ENCODE measurements at regions of chr16 and their contacts with region 1.

Region 1: DNA sequence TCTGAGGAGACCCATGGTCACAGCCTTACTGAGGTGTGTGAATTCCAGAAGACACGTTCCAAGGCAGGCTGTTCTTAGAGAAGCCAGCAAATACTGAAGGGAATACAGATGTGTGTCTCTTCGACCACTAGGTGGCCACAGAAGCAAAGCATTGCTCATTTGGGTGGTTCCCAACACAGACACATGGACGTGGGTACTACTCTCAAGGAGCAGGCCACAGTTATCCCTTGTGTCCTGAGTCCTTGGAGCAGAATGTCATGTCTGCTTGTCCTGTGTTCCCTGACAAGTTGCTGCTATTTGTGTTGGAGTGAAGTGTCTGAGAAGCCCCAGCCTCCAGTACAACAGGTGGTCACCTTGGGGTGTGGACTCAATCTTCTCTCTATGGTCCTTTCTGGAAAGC is 30.3 kb downstream of the HMOX2 start:
- DNase-seq: peak; percentile 71
- H3K4me3 Mint-ChIP-seq: peak overlapping the region; percentile 52
- H3K27ac Mint-ChIP-seq: peak overlapping the region; percentile 93
- H3K4me1 Mint-ChIP-seq: peaks cover 58% of the 10 kb centered on the region
- H3K27me3 Mint-ChIP-seq: no peaks in the 10 kb centered on the region

Region 2: GRCh38 chr16:4465977-4466779 is 40.3 kb before region 1 on chr16:
- CTCF ChIA-PET with region 1: interaction called, 11 read pairs
- POLR2A ChIA-PET with region 1: interaction called, 14 read pairs
- DNase-seq: peak; percentile 84
- H3K4me3 Mint-ChIP-seq: peak overlapping the region; percentile 1
- H3K27ac Mint-ChIP-seq: peak overlapping the region; percentile 87
- H3K4me1 Mint-ChIP-seq: peaks cover 31% of the 10 kb centered on the region
- H3K27me3 Mint-ChIP-seq: no peaks in the 10 kb centered on the region

Region 3: DNA sequence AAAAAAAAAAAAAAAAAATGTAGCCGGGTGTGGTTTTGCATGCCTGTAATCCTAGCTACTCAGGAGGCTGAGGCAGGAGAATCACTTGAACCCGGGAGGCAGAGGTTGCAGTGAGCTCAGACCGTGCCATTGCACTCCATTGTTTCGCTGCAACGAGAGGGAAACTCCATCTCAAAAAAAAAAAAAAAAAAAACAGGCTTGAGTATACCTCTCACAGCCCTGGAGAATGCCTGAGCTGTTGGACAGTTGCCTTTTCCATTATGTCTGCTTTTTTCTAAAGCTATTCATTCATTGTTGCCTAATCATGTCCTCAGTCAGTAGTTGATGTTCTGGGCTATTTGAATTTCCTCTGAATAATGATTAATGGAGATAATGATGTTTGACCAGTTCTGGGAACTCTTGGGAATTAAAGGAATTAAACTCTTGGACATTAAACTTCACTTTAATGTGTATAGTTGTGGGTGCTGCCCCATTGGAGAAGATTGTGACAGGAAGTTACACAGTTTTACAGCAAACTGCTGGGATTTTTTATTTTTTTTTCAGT is 18.4 kb before region 1 on chr16:
- CTCF ChIA-PET with region 1: interaction called, 43 read pairs
- POLR2A ChIA-PET with region 1: interaction called, 48 read pairs
- DNase-seq: no peak
- H3K4me3 Mint-ChIP-seq: peak overlapping the region; percentile 55
- H3K27ac Mint-ChIP-seq: peak overlapping the region; percentile 97
- H3K4me1 Mint-ChIP-seq: peaks cover 47% of the 10 kb centered on the region
- H3K27me3 Mint-ChIP-seq: no peaks in the 10 kb centered on the region

Region 4: GRCh38 chr16:4517812-4518680 is 11.6 kb after region 1 on chr16:
- CTCF ChIA-PET with region 1: interaction called, 50 read pairs
- POLR2A ChIA-PET with region 1: interaction called, 25 read pairs
- DNase-seq: no peak
- H3K4me3 Mint-ChIP-seq: no peak overlapping the region
- H3K27ac Mint-ChIP-seq: no peak overlapping the region
- H3K4me1 Mint-ChIP-seq: peaks cover 41% of the 10 kb centered on the region
- H3K27me3 Mint-ChIP-seq: no peaks in the 10 kb centered on the region

Region 5: DNA sequence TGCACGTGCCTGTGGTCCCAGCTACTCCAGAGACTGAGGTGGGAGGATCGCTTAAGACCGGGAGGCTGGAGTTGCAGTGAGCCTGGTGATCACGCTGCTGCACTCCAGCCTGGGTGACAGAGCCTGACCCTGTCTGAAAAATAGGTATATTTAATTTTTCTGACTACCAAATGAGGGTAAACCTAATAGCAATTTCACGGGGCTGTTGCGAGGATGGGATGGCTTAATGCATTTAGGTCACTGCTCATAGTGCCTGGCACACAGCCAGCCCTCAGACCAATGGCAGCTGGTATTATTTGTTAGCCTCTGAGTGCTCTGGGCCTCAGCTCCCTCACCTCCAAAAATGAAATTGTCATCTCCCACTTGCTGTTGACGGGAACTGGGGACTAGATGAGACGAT is 38.0 kb after region 1 on chr16:
- CTCF ChIA-PET with region 1: interaction called, 126 read pairs
- POLR2A ChIA-PET with region 1: interaction called, 16 read pairs
- DNase-seq: no peak
- H3K4me3 Mint-ChIP-seq: no peak overlapping the region
- H3K27ac Mint-ChIP-seq: no peak overlapping the region
- H3K4me1 Mint-ChIP-seq: peaks cover 4% of the 10 kb centered on the region
- H3K27me3 Mint-ChIP-seq: peaks cover 1% of the 10 kb centered on the region

Region 6: DNA sequence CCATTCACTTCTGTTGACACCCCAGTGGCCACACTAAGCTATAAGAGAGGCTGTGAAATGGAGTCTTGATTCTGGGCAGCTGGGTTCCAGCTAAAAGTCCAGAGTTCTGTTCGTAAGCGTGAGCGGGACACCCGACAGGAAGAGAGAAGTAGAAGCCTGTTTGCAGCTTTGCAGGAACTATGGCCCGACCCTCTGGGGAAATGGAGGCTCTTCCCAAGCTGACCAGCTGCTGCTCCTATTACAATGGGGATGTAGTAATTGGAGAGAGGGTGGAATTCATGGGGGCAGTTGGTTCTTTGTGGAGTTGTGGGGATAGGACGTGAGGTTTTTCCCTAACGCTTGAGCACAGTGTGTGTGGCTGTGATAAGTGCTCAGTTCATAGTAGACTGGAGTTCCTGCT is 79.8 kb after region 1 on chr16:
- CTCF ChIA-PET with region 1: interaction called, 50 read pairs
- POLR2A ChIA-PET with region 1: no interaction called
- DNase-seq: no peak
- H3K4me3 Mint-ChIP-seq: no peak overlapping the region
- H3K27ac Mint-ChIP-seq: no peak overlapping the region
- H3K4me1 Mint-ChIP-seq: peaks cover 4% of the 10 kb centered on the region
- H3K27me3 Mint-ChIP-seq: peaks cover 8% of the 10 kb centered on the region

Region 7: GRCh38 chr16:4624015-4624826 is 117.8 kb after region 1 on chr16 and contains the start of gene MGRN1:
- CTCF ChIA-PET with region 1: interaction called, 20 read pairs
- POLR2A ChIA-PET with region 1: interaction called, 6 read pairs
- DNase-seq: peak; percentile 94
- H3K4me3 Mint-ChIP-seq: peak within 1 kb of the TSS; percentile 99
- H3K27ac Mint-ChIP-seq: peak within 1 kb of the TSS; percentile 92
- H3K4me1 Mint-ChIP-seq: peaks cover 40% of the 10 kb centered on the region
- H3K27me3 Mint-ChIP-seq: no peaks in the 10 kb centered on the region
- total RNA-seq, gene MGRN1: 71.8 to 73.3 TPM

Region 8: GRCh38 chr16:4814542-4815173 is 308.2 kb after region 1 on chr16:
- CTCF ChIA-PET with region 1: no interaction called
- POLR2A ChIA-PET with region 1: no interaction called
- DNase-seq: no peak
- H3K4me3 Mint-ChIP-seq: no peak overlapping the region
- H3K27ac Mint-ChIP-seq: no peak overlapping the region
- H3K4me1 Mint-ChIP-seq: no peaks in the 10 kb centered on the region
- H3K27me3 Mint-ChIP-seq: no peaks in the 10 kb centered on the region

Measured in activated CD4-positive, alpha-beta memory T cell treated with anti-CD3 and anti-CD28 coated beads, Interleukin-2, amount 10 ng/mL, durations not matched to agents 7 days and 5 days (primary cell).